Left ventricle myocardium superior (tissue), 1 donor: ENCODE measurements at regions of chr2 and their contacts with region 1.

Region 1: GRCh38 chr2:11411768-11412448 is 54.1 kb downstream of the E2F6 start:
- DNase-seq: peak; percentile 34
- ATAC-seq: peak; percentile 78

Region 2: GRCh38 chr2:11344342-11344955 is 67.5 kb before region 1 on chr2 and contains the start of gene ROCK2:
- intact Hi-C with region 1: loop called (anchors 10 kb)
- DNase-seq: peak; percentile 94
- ATAC-seq: peak; percentile 84
- total RNA-seq, gene ROCK2: 34.2 TPM

Region 3: GRCh38 chr2:11532380-11533054 is 120.6 kb after region 1 on chr2:
- intact Hi-C with region 1: no loop called
- DNase-seq: no peak
- ATAC-seq: no peak

Region 4: DNA sequence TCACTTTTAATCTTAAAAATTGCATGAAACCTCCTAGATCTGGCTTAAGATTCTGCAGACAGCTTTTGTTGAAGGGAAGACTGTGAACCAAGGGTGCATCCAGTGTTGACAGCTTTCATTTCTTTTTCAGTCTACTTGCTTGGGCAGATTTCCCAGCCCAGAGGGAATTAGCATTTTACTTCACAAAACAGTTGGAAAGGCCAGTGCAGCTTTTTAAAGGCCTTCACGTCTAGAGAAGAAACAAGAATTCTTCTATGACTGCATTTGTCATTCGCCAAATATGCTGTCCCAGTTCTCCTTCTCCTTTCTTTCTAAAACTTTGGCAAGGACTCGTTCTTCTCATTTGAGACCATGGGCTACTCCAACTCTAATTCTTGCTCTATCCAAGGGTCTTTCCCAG is 240.6 kb after region 1 on chr2:
- intact Hi-C with region 1: no loop called
- DNase-seq: no peak
- ATAC-seq: peak; percentile 42